A549 (cell line): ENCODE measurements at regions of chr20 and their contacts with region 1.

Region 1: GRCh38 chr20:36861875-36862801 is 13.8 kb upstream of the TLDC2 start:
- DNase-seq: peak; percentile 91 to 96
- ATAC-seq: peak; percentile 47 to 80
- H3K4me3 ChIP-seq: peak overlapping the region; percentile 85
- H3K27ac ChIP-seq: peak overlapping the region; percentile 79 to 96
- H3K4me1 ChIP-seq: peaks cover 31% of the 10 kb centered on the region; the same call in 2 of the 3 replicates
- CTCF ChIP-seq: no peak
- EP300 ChIP-seq: no peak
- POLR2A ChIP-seq: peak; percentile 76
- RAD21 ChIP-seq: no peak; a peak in 1 of 5 replicates

Region 2: GRCh38 chr20:36773597-36774390 is 88.3 kb before region 1 on chr20 and contains the start of gene DSN1:
- CTCF ChIA-PET with region 1: interaction called, 29 read pairs
- POLR2A ChIA-PET with region 1: interaction called, 4 read pairs
- DNase-seq: peak; percentile 96 to 98
- ATAC-seq: peak; percentile 89 to 91
- H3K4me3 ChIP-seq: peak within 1 kb of the TSS; percentile 63
- H3K27ac ChIP-seq: peak within 1 kb of the TSS; percentile 93 to 98
- H3K4me1 ChIP-seq: peaks cover 8% of the 10 kb centered on the region
- CTCF ChIP-seq: no peak; the same call in 2 of the 3 replicates
- EP300 ChIP-seq: no peak
- POLR2A ChIP-seq: peak; percentile 61
- RAD21 ChIP-seq: peak; percentile 43 to 49; a peak in 3 of 5 replicates
- polyA plus RNA-seq, gene DSN1: 32.9 and 41.3 TPM in 2 replicates

Region 3: GRCh38 chr20:36815454-36816091 is 46.6 kb before region 1 on chr20:
- CTCF ChIA-PET with region 1: interaction called, 21 read pairs
- POLR2A ChIA-PET with region 1: no interaction called
- DNase-seq: no peak
- ATAC-seq: no peak
- H3K4me3 ChIP-seq: no peak overlapping the region
- H3K27ac ChIP-seq: no peak overlapping the region
- H3K4me1 ChIP-seq: no peaks in the 10 kb centered on the region
- CTCF ChIP-seq: no peak
- EP300 ChIP-seq: no peak
- POLR2A ChIP-seq: no peak
- RAD21 ChIP-seq: no peak

Region 4: GRCh38 chr20:36835453-36836198 is 26.5 kb before region 1 on chr20:
- CTCF ChIA-PET with region 1: interaction called, 96 read pairs
- POLR2A ChIA-PET with region 1: interaction called, 9 read pairs
- DNase-seq: peak; percentile 92 to 98
- ATAC-seq: peak; percentile 97 to 98
- H3K4me3 ChIP-seq: peak overlapping the region; percentile 33
- H3K27ac ChIP-seq: peak overlapping the region; percentile 87 to 92
- H3K4me1 ChIP-seq: peaks cover 34% of the 10 kb centered on the region
- CTCF ChIP-seq: no peak
- EP300 ChIP-seq: no peak
- POLR2A ChIP-seq: 0 out of 2 replicates have a peak, but pooled peaks have one; percentile 15
- RAD21 ChIP-seq: no peak

Region 5: GRCh38 chr20:36872852-36873251 is 10.7 kb after region 1 on chr20:
- CTCF ChIA-PET with region 1: interaction called, 19 read pairs
- POLR2A ChIA-PET with region 1: interaction called, 3 read pairs
- DNase-seq: no peak
- ATAC-seq: peak in 1 of 2 experiments; percentile 27; a peak in 2 of 6 replicates
- H3K4me3 ChIP-seq: no peak overlapping the region
- H3K27ac ChIP-seq: no peak overlapping the region
- H3K4me1 ChIP-seq: no peaks in the 10 kb centered on the region
- CTCF ChIP-seq: no peak
- EP300 ChIP-seq: no peak
- POLR2A ChIP-seq: no peak
- RAD21 ChIP-seq: no peak

Region 6: GRCh38 chr20:36886859-36887751 is 25.0 kb after region 1 on chr20:
- CTCF ChIA-PET with region 1: interaction called, 32 read pairs
- POLR2A ChIA-PET with region 1: interaction called, 3 read pairs
- DNase-seq: peak; percentile 80 to 90
- ATAC-seq: peak; percentile 93 to 97
- H3K4me3 ChIP-seq: no peak overlapping the region
- H3K27ac ChIP-seq: peak overlapping the region; percentile 24 to 64; a peak in 4 of 6 replicates
- H3K4me1 ChIP-seq: no peaks in the 10 kb centered on the region
- CTCF ChIP-seq: peak; percentile 92
- EP300 ChIP-seq: no peak
- POLR2A ChIP-seq: no peak
- RAD21 ChIP-seq: peak; percentile 93 to 96